ENCODE measurements at regions of chr18 and their contacts with region 1.

Region 1: GRCh38 chr18:32271672-32272208 is 81.9 kb downstream of the MEP1B start:
- DNase-seq: peak in 1 of 10 donors; percentile 51
- H3K4me3 ChIP-seq: no peak overlapping the region
- H3K27ac ChIP-seq: peak overlapping the region in 3 of 59 donors; percentile 5 to 31 (median 31)
- H3K27me3 ChIP-seq: no peaks in the 10 kb centered on the region
- CTCF ChIP-seq: peak; percentile 51 to 84 (median 73)

Region 2: GRCh38 chr18:31722369-31722957 is 549.3 kb before region 1 on chr18:
- intact Hi-C with region 1: no loop called
- DNase-seq: peak; percentile 58 to 92 (median 79)
- H3K4me3 ChIP-seq: no peak overlapping the region
- H3K27ac ChIP-seq: no peak overlapping the region
- H3K27me3 ChIP-seq: peaks cover 0 to 8% (median 0%) of the 10 kb centered on the region in 45 donors
- CTCF ChIP-seq: peak; percentile 53 to 93 (median 86)

Region 3: GRCh38 chr18:32158108-32158624 is 113.6 kb before region 1 on chr18:
- intact Hi-C with region 1: loop called (anchors 5 to 10 kb)
- DNase-seq: peak; percentile 61 to 91 (median 84)
- H3K4me3 ChIP-seq: peak overlapping the region in 57 of 59 donors; percentile 4 to 64 (median 46)
- H3K27ac ChIP-seq: no peak overlapping the region
- H3K27me3 ChIP-seq: no peaks in the 10 kb centered on the region
- CTCF ChIP-seq: peak; percentile 70 to 97 (median 90)

Region 4: DNA sequence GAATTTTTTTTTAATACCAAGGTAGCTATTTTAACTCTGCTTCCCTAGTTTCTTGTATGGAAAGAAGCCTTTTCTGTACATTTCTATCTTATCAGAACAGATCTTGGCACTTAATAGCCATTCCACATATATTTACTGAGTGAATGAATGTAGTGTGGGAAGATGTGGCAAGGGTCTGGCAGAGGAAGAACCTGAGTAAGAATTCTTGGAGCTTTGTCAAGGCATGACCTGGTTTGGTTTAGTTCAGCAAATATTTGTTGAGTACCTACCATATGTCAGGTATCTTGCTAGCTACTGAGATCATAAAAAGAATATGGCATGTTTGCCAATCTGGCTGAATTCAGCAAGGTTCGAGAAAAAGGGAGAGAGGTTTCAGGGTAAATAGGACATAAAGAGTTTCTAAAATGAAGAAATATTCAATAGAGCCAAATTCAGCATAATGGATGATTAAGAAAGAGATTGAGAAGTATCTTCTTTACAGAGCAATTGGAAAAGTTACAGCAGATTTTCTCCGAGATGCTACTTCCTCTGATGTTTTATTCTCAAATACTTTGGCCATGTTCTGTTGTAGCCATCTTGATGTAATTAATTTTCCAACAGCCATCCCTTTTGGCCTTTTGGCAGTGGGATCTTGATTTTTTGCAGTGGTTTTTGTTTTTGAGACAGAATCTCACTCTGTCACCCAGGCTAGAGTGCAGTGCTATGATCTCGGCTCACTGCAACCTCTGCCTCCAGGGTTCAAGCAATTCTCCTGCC is 103.6 kb before region 1 on chr18:
- intact Hi-C with region 1: loop called in 1 of 2 experiments (anchors 10 kb)
- DNase-seq: no peak
- H3K4me3 ChIP-seq: no peak overlapping the region
- H3K27ac ChIP-seq: no peak overlapping the region
- H3K27me3 ChIP-seq: no peaks in the 10 kb centered on the region
- CTCF ChIP-seq: no peak

Region 5: GRCh38 chr18:32219431-32220018 is 52.2 kb before region 1 on chr18:
- intact Hi-C with region 1: no loop called
- DNase-seq: no peak
- H3K4me3 ChIP-seq: no peak overlapping the region
- H3K27ac ChIP-seq: peak overlapping the region in 2 of 59 donors; percentile 11 to 24
- H3K27me3 ChIP-seq: no peaks in the 10 kb centered on the region
- CTCF ChIP-seq: no peak

Region 6: GRCh38 chr18:32310101-32310500 is 38.4 kb after region 1 on chr18:
- intact Hi-C with region 1: no loop called
- DNase-seq: no peak
- H3K4me3 ChIP-seq: peak overlapping the region in 4 of 59 donors; percentile 4 to 39 (median 16)
- H3K27ac ChIP-seq: peak overlapping the region in 17 of 59 donors; percentile 1 to 56 (median 34)
- H3K27me3 ChIP-seq: no peaks in the 10 kb centered on the region
- CTCF ChIP-seq: no peak

Region 7: DNA sequence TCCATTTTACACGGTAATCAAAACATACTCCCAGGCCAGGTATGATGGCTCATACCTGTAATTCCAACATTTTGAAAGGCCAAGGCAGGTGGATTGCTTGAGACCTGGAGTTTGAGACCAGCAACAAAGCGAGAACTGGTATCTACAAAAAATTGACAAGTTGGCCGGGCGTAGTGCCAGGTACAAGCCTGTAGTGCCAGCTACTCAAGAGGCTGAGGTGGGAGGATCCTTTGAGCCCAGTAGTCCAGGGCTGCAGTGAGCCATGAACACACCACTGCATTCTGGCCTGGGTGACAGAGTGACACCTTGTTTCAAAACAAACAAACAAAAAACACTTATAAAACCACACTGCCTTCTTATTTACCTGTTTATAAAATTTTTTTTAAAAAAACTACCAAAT is 118.1 kb after region 1 on chr18:
- intact Hi-C with region 1: no loop called
- DNase-seq: peak in 1 of 10 donors; percentile 22
- H3K4me3 ChIP-seq: no peak overlapping the region
- H3K27ac ChIP-seq: peak overlapping the region in 2 of 59 donors; percentile 7 to 15
- H3K27me3 ChIP-seq: no peaks in the 10 kb centered on the region
- CTCF ChIP-seq: no peak

Region 8: DNA sequence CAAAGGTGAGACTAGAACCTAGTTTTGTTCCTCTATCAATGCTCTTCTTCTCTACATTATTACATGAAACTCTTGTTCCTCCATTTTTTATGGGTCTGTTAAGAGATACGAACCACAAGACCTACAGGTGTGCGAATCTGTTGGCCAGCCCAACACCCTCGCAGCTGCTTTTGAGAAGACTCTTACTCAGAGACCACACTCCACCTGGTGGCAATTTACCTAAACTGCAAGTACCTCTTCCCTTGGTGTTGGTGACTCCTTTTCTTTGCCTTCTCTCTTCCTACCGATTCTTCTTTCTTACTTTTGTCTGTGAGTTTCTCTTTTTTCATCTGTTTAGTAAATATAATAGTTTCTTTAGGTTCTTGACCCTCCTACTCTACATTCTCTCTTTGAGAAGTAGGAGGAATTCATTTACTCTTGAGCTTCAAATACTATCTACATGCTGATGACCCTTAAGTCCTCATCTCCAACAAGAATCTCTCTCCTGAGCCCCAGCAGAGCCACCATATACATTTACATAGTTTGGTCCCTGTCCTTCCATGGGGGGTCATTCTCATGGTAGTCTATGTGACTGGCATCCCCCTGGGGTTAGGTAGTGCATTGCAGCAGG is 280.8 kb after region 1 on chr18:
- intact Hi-C with region 1: loop called (anchors 5 kb)
- DNase-seq: peak in 6 of 10 donors; percentile 26 to 64 (median 48)
- H3K4me3 ChIP-seq: no peak overlapping the region
- H3K27ac ChIP-seq: no peak overlapping the region
- H3K27me3 ChIP-seq: no peaks in the 10 kb centered on the region
- CTCF ChIP-seq: peak; percentile 54 to 90 (median 78)

Measured in dorsolateral prefrontal cortex (tissue), 120 donors.